ENCODE measurements at regions of chr6 and their contacts with region 1.

Region 1: GRCh38 chr6:158697811-158698210 is 48.0 kb downstream of the SYTL3 start:
- DNase-seq: no peak
- H3K4me3 Mint-ChIP-seq: no peak overlapping the region
- H3K27ac Mint-ChIP-seq: peak overlapping the region; percentile 91
- H3K4me1 Mint-ChIP-seq: peaks cover 25% of the 10 kb centered on the region
- H3K27me3 Mint-ChIP-seq: no peaks in the 10 kb centered on the region

Region 2: GRCh38 chr6:158213925-158214674 is 483.7 kb before region 1 on chr6:
- intact Hi-C with region 1: loop called (anchors 10 kb)
- DNase-seq: peak; percentile 44
- H3K4me3 Mint-ChIP-seq: no peak overlapping the region
- H3K27ac Mint-ChIP-seq: no peak overlapping the region
- H3K4me1 Mint-ChIP-seq: peaks cover 20% of the 10 kb centered on the region
- H3K27me3 Mint-ChIP-seq: no peaks in the 10 kb centered on the region

Region 3: DNA sequence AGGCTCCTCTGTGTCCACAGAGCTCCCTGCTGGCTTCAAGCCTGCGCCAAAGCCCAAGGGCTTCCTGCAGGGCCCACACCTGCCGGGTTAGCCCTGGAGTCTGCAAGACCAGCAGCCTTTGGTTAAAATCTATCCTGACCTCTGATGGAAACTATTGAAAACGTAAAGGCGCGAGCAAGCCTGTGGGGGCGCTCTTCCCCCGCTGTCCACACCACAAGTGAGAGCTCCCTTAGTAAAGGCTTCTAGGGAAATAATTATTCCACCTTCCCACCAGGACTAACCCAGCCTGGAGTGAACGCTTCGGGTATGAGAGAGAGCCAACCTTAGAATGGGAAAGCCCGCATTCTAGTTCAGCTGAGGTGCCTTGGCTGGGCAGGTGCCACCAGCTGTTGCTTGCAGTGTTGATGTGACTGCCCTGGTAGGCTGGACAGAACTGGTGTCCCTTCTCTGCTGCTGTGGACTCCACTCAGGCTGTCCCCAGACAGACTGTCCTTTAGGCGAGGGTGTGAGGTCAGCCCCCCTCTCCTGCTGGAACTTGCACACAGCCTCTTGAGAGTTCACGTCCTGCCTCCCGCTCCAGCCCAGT is 20.7 kb after region 1 on chr6:
- intact Hi-C with region 1: no loop called
- DNase-seq: no peak
- H3K4me3 Mint-ChIP-seq: no peak overlapping the region
- H3K27ac Mint-ChIP-seq: no peak overlapping the region
- H3K4me1 Mint-ChIP-seq: peaks cover 56% of the 10 kb centered on the region
- H3K27me3 Mint-ChIP-seq: no peaks in the 10 kb centered on the region

Measured in activated T-helper 2 cell treated with anti-CD3 and anti-CD28 coated beads, Interferon-gamma antibody, Interleukin-2, Interleukin-4, amounts not matched to agents 10 μg/mL and 5 μg/mL and 100 μg/mL, durations not matched to agents 14 hours and 24 hours and 36 hours (primary cell).